GM12878 (cell line): ENCODE measurements at regions of chr18 and their contacts with region 1.

Region 1: GRCh38 chr18:48785091-48785614 is 165.6 kb downstream of the SMAD7 start:
- DNase-seq: peak; percentile 94
- ATAC-seq: peak; percentile 94
- H3K4me3 ChIP-seq: peak overlapping the region; percentile 54; the same call in 1 of the 2 replicates
- H3K27ac ChIP-seq: peak overlapping the region; percentile 91
- H3K4me1 ChIP-seq: peaks cover 47% of the 10 kb centered on the region
- H3K27me3 ChIP-seq: no peaks in the 10 kb centered on the region
- CTCF ChIP-seq: no peak
- EP300 ChIP-seq: peak; percentile 85 to 87; a peak in 2 of 4 replicates
- POLR2A ChIP-seq: 0 out of 2 replicates have a peak, but pooled peaks have one; percentile 27
- RAD21 ChIP-seq: peak; percentile 23; the same call in 1 of the 2 replicates

Region 2: DNA sequence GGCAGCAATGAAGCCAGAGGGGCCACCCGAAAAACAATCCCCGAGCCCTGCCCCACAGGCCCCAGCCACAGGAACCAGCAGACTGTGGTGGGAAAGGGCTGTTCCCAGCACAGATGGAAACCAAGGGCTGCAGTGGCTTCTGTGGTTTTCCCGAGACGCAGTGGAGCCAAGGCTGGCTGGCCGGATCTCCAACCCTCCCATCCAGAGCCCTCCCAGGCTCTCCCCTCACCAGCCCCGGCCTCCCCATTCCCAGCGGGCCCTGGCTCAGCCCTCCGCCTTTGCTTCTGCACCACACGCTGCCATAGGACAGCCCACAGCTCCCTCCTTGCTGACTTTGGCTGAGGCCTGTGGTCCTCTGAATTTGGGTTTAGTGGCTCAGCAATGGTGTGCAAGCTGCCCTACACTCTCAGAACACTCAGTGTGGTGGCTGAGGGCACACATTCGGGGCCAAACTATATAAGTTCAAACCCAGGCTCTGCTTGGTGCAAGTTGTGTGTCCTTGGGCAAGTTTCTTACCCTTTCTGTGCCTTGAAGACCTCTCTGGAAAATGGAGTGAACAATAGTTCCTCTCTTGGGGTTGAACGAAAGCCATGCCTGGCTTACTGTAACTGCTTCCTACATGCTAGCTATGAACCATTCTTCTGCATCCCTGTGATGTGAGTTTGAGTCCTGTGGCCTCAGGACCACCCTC is 34.5 kb before region 1 on chr18:
- CTCF ChIA-PET with region 1: interaction called, 3 read pairs
- POLR2A ChIA-PET with region 1: interaction called, 7 read pairs
- RAD21 ChIA-PET with region 1: no interaction called
- SMC1A ChIA-PET with region 1: no interaction called
- in situ Hi-C with region 1: no loop called
- intact Hi-C with region 1: loop called (anchors 2 kb)
- DNase-seq: no peak
- ATAC-seq: no peak
- H3K4me3 ChIP-seq: no peak overlapping the region
- H3K27ac ChIP-seq: no peak overlapping the region
- H3K4me1 ChIP-seq: peaks cover 28% of the 10 kb centered on the region
- H3K27me3 ChIP-seq: no peaks in the 10 kb centered on the region
- CTCF ChIP-seq: no peak
- EP300 ChIP-seq: no peak
- POLR2A ChIP-seq: no peak
- RAD21 ChIP-seq: no peak

Region 3: GRCh38 chr18:48800876-48801727 is 15.9 kb after region 1 on chr18:
- CTCF ChIA-PET with region 1: interaction called, 36 read pairs
- POLR2A ChIA-PET with region 1: interaction called, 30 read pairs
- RAD21 ChIA-PET with region 1: interaction called, 86 read pairs
- SMC1A ChIA-PET with region 1: interaction called, 51 read pairs
- in situ Hi-C with region 1: no loop called
- intact Hi-C with region 1: loop called (anchors 1 kb)
- DNase-seq: peak; percentile 89
- ATAC-seq: peak; percentile 87
- H3K4me3 ChIP-seq: peak overlapping the region; percentile 36; the same call in 1 of the 2 replicates
- H3K27ac ChIP-seq: peak overlapping the region; percentile 92
- H3K4me1 ChIP-seq: peaks cover 52% of the 10 kb centered on the region
- H3K27me3 ChIP-seq: no peaks in the 10 kb centered on the region
- CTCF ChIP-seq: no peak
- EP300 ChIP-seq: peak; percentile 87 to 93
- POLR2A ChIP-seq: peak; percentile 60; the same call in 1 of the 2 replicates
- RAD21 ChIP-seq: no peak

Region 4: GRCh38 chr18:48806551-48807261 is 21.6 kb after region 1 on chr18:
- CTCF ChIA-PET with region 1: interaction called, 36 read pairs
- POLR2A ChIA-PET with region 1: interaction called, 30 read pairs
- RAD21 ChIA-PET with region 1: interaction called, 86 read pairs
- SMC1A ChIA-PET with region 1: interaction called, 54 read pairs
- in situ Hi-C with region 1: no loop called
- intact Hi-C with region 1: loop called (anchors 1 kb)
- DNase-seq: no peak
- ATAC-seq: peak; percentile 55
- H3K4me3 ChIP-seq: no peak overlapping the region
- H3K27ac ChIP-seq: peak overlapping the region; percentile 53
- H3K4me1 ChIP-seq: peaks cover 34% of the 10 kb centered on the region
- H3K27me3 ChIP-seq: no peaks in the 10 kb centered on the region
- CTCF ChIP-seq: no peak
- EP300 ChIP-seq: no peak
- POLR2A ChIP-seq: no peak
- RAD21 ChIP-seq: no peak

Region 5: GRCh38 chr18:48813833-48814489 is 28.8 kb after region 1 on chr18:
- CTCF ChIA-PET with region 1: interaction called, 6 read pairs
- POLR2A ChIA-PET with region 1: interaction called, 23 read pairs
- RAD21 ChIA-PET with region 1: interaction called, 48 read pairs
- SMC1A ChIA-PET with region 1: interaction called, 54 read pairs
- in situ Hi-C with region 1: no loop called
- intact Hi-C with region 1: loop called (anchors 2 kb)
- DNase-seq: no peak
- ATAC-seq: peak; percentile 70
- H3K4me3 ChIP-seq: no peak overlapping the region
- H3K27ac ChIP-seq: peak overlapping the region; percentile 81
- H3K4me1 ChIP-seq: peaks cover 33% of the 10 kb centered on the region
- H3K27me3 ChIP-seq: no peaks in the 10 kb centered on the region
- CTCF ChIP-seq: no peak
- EP300 ChIP-seq: no peak
- POLR2A ChIP-seq: no peak
- RAD21 ChIP-seq: no peak

Region 6: GRCh38 chr18:48820483-48821250 is 35.5 kb after region 1 on chr18:
- CTCF ChIA-PET with region 1: interaction called, 15 read pairs
- POLR2A ChIA-PET with region 1: interaction called, 17 read pairs
- RAD21 ChIA-PET with region 1: interaction called, 48 read pairs
- SMC1A ChIA-PET with region 1: interaction called, 54 read pairs
- in situ Hi-C with region 1: no loop called
- intact Hi-C with region 1: loop called (anchors 1 kb)
- DNase-seq: peak; percentile 93
- ATAC-seq: peak; percentile 95
- H3K4me3 ChIP-seq: no peak overlapping the region
- H3K27ac ChIP-seq: peak overlapping the region; percentile 60
- H3K4me1 ChIP-seq: peaks cover 20% of the 10 kb centered on the region
- H3K27me3 ChIP-seq: no peaks in the 10 kb centered on the region
- CTCF ChIP-seq: no peak
- EP300 ChIP-seq: peak; percentile 51 to 83
- POLR2A ChIP-seq: no peak
- RAD21 ChIP-seq: peak; percentile 9; the same call in 1 of the 2 replicates

Region 7: GRCh38 chr18:48827291-48828193 is 42.4 kb after region 1 on chr18:
- CTCF ChIA-PET with region 1: interaction called, 15 read pairs
- POLR2A ChIA-PET with region 1: interaction called, 20 read pairs
- RAD21 ChIA-PET with region 1: interaction called, 72 read pairs
- SMC1A ChIA-PET with region 1: interaction called, 76 read pairs
- in situ Hi-C with region 1: no loop called
- intact Hi-C with region 1: no loop called
- DNase-seq: no peak
- ATAC-seq: no peak
- H3K4me3 ChIP-seq: no peak overlapping the region
- H3K27ac ChIP-seq: no peak overlapping the region
- H3K4me1 ChIP-seq: peaks cover 16% of the 10 kb centered on the region
- H3K27me3 ChIP-seq: no peaks in the 10 kb centered on the region
- CTCF ChIP-seq: no peak
- EP300 ChIP-seq: no peak
- POLR2A ChIP-seq: no peak
- RAD21 ChIP-seq: no peak

Region 8: GRCh38 chr18:49059028-49059834 is 274.1 kb after region 1 on chr18:
- CTCF ChIA-PET with region 1: no interaction called
- POLR2A ChIA-PET with region 1: no interaction called
- RAD21 ChIA-PET with region 1: no interaction called
- SMC1A ChIA-PET with region 1: no interaction called
- in situ Hi-C with region 1: no loop called
- intact Hi-C with region 1: no loop called
- DNase-seq: no peak
- ATAC-seq: no peak
- H3K4me3 ChIP-seq: no peak overlapping the region
- H3K27ac ChIP-seq: no peak overlapping the region
- H3K4me1 ChIP-seq: peaks cover 10% of the 10 kb centered on the region
- H3K27me3 ChIP-seq: no peaks in the 10 kb centered on the region
- CTCF ChIP-seq: peak; percentile 7 to 12 (median 10); a peak in 1 of 6 replicates
- EP300 ChIP-seq: no peak
- POLR2A ChIP-seq: no peak
- RAD21 ChIP-seq: peak; percentile 41; the same call in 1 of the 2 replicates